ENCODE measurements at regions of chr3 and their contacts with region 1.

Region 1: DNA sequence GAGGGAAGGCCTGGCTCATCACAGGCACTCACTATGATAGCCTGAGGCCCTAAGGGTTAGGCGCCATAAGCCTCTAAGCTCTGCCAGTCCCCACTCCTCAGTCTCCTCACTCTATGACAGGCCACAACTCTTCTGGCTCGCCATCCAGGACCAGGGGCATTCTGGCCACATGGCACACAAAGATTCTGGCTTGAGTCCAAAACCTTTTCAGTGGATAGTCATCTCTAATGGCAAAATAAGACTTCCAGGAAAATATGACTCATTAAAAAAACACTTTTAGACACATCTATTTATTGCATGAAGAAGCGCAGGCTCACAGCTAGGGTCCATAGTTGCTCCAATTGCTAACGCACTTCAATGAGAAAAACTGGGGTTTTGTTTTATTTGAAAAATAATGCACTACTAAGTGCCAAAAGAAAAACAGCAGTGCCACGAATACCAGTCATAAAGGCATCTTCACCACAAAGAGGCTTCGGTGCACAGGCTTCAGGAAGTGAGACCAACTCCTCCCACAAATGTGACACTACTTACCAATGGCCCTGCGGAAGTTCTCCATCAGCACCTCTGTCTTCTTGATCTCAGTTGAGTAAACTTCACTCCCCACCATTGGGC is 11.1 kb downstream of the RUVBL1 start:
- DNase-seq: peak; percentile 85
- H3K4me3 ChIP-seq: no peak overlapping the region
- H3K27ac ChIP-seq: no peak overlapping the region
- H3K4me1 ChIP-seq: peaks cover 12% of the 10 kb centered on the region
- H3K27me3 ChIP-seq: no peaks in the 10 kb centered on the region
- CTCF ChIP-seq: peak in 1 of 2 donors; percentile 12

Region 2: DNA sequence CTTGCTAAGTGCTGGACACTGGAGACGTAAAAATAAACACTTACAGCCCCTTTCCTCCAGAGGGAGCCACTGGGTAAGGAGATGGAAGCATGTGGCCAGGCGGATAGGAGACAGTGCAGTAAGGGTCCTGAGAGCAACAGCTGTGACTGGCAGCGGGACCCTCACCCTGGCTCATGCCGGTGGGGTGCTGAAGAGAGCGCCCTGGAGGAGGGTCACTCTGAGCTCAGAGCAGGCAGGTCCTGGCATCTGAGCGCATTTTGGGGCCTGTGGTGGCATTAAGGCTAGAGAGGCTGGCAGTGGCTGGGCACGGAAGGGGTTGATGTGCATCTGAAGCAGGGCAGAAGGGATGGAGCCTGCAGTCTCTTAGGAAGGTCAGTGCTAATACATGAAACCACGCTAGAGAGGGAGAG is 44.2 kb before region 1 on chr3:
- CTCF ChIA-PET with region 1: no interaction called
- dilution Hi-C with region 1: loop called (anchors 5 kb)
- in situ Hi-C with region 1: no loop called
- intact Hi-C with region 1: no loop called
- DNase-seq: no peak
- H3K4me3 ChIP-seq: no peak overlapping the region
- H3K27ac ChIP-seq: no peak overlapping the region
- H3K4me1 ChIP-seq: peaks cover 20% of the 10 kb centered on the region
- H3K27me3 ChIP-seq: no peaks in the 10 kb centered on the region
- CTCF ChIP-seq: peak; percentile 57 to 63

Region 3: GRCh38 chr3:128080320-128081080 is 32.0 kb before region 1 on chr3:
- CTCF ChIA-PET with region 1: no interaction called
- dilution Hi-C with region 1: no loop called
- in situ Hi-C with region 1: no loop called
- intact Hi-C with region 1: no loop called
- DNase-seq: peak; percentile 79
- H3K4me3 ChIP-seq: no peak overlapping the region
- H3K27ac ChIP-seq: no peak overlapping the region
- H3K4me1 ChIP-seq: peaks cover 31% of the 10 kb centered on the region
- H3K27me3 ChIP-seq: no peaks in the 10 kb centered on the region
- CTCF ChIP-seq: no peak

Region 4: DNA sequence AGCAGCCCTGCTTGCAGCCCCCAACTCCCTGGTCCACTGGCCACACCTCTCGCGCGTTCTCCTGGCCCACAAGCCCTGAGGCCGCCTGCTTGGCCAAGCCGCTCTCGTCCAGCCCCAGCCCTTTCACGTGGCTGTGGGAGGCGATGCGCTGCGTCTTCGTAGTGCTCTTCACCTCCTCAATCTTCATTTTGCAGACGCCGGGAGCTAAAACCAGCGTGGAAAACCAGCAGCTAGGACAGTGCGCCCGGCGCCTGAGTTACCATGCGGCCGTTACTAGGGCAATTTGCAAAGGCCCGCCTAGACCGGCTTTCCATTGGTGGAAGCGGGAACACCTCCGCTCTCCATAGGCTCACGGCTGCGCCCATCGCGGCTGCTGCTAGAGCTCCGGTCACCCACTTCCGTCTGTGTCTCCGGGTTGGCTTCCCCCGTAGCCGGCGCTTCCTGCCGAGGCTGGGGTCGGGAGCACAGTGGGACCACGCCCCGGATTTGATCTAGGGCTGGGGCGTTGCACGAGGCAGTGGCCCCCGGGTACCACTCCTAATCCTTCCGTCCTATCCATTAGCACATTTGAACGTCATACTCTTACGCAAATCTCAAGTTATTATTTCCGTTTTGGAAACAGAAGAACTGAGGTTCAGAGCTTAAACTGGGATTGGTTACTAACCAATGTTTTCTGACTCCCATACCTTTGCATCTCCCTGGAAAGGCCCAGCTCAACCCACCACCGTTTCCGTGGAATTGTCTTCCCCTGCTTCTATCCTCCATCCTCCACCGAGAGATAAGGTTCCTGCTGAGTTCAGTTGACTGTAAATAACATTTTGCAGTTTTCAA is 11.3 kb after region 1 on chr3 and contains the start of gene RUVBL1:
- CTCF ChIA-PET with region 1: interaction called, 4 read pairs
- dilution Hi-C with region 1: no loop called
- in situ Hi-C with region 1: no loop called
- intact Hi-C with region 1: loop called (anchors 1 kb)
- DNase-seq: peak; percentile 97
- H3K4me3 ChIP-seq: peak within 1 kb of the TSS; percentile 98 to 100 (median 98)
- H3K27ac ChIP-seq: peak within 1 kb of the TSS; percentile 88
- H3K4me1 ChIP-seq: peaks cover 11% of the 10 kb centered on the region
- H3K27me3 ChIP-seq: no peaks in the 10 kb centered on the region
- CTCF ChIP-seq: no peak
- total RNA-seq, gene RUVBL1: 53.7 to 78.8 TPM

Region 5: DNA sequence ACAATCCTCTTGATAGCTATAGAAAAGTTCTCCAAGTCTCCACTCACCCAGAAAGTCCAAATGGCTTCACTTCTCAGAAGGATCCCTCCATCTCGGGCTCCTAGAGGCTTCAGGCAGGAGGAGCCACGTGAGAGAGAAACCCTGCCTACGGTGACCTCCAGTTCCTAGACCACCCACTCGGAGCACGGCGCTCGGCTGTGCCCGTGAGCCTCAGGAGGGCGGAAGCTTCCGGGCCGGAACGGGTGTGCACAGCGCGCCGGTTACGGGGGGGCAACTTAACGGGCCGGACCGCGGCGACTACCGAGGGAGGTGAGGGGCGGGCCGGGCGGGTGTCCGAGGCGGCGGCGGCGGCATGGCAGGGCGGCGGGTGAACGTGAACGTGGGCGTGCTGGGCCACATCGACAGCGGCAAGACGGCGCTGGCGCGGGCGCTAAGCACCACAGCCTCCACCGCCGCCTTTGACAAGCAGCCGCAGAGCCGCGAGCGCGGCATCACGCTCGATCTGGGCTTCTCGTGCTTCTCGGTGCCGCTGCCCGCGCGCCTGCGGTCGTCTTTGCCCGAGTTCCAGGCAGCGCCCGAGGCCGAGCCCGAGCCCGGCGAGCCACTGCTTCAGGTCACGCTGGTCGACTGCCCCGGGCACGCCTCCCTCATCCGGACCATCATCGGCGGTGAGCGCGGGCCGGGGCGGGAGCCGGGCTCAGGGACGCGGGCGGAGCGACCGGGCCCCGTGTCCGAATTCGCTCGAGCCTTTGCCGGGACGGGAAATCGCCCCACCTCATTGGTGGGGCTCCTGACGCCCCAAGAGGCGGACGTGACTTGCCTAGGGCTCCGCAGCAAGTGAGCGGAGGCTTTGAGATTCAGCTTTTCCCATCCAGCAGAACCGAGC is 40.9 kb after region 1 on chr3 and contains the start of gene EEFSEC:
- CTCF ChIA-PET with region 1: no interaction called
- dilution Hi-C with region 1: no loop called
- in situ Hi-C with region 1: no loop called
- intact Hi-C with region 1: loop called (anchors 5 kb)
- DNase-seq: peak; percentile 83
- H3K4me3 ChIP-seq: peak within 1 kb of the TSS; percentile 89 to 97 (median 90)
- H3K27ac ChIP-seq: peak within 1 kb of the TSS; percentile 78
- H3K4me1 ChIP-seq: peaks cover 5% of the 10 kb centered on the region
- H3K27me3 ChIP-seq: no peaks in the 10 kb centered on the region
- CTCF ChIP-seq: no peak
- total RNA-seq, gene EEFSEC: 7.0 to 15.9 TPM

Region 6: DNA sequence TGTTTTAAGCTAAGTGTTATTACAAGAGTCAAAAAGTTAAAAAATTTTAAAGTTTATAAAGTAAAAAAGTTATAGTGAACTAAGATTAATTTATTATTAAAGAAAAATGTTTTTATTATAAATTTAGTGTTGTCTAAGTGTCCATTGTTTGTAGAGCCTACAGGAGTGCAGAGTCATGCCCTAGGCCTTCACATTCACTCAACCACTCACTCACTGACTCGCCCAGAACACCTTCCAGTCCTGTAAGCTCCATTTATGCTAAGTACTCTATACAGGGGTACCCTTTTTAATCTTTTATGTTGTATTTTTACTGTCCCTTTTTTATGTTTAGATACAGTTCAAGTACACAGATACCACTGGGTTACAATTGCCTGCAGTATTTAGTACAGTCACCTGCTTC is 78.0 kb after region 1 on chr3:
- CTCF ChIA-PET with region 1: no interaction called
- dilution Hi-C with region 1: no loop called
- in situ Hi-C with region 1: no loop called
- intact Hi-C with region 1: no loop called
- DNase-seq: peak; percentile 32
- H3K4me3 ChIP-seq: no peak overlapping the region
- H3K27ac ChIP-seq: no peak overlapping the region
- H3K4me1 ChIP-seq: peaks cover 8% of the 10 kb centered on the region
- H3K27me3 ChIP-seq: no peaks in the 10 kb centered on the region
- CTCF ChIP-seq: no peak

Region 7: GRCh38 chr3:128278761-128279600 is 166.5 kb after region 1 on chr3:
- CTCF ChIA-PET with region 1: no interaction called
- dilution Hi-C with region 1: no loop called
- in situ Hi-C with region 1: no loop called
- intact Hi-C with region 1: no loop called
- DNase-seq: no peak
- H3K4me3 ChIP-seq: no peak overlapping the region
- H3K27ac ChIP-seq: no peak overlapping the region
- H3K4me1 ChIP-seq: peaks cover 18% of the 10 kb centered on the region
- H3K27me3 ChIP-seq: no peaks in the 10 kb centered on the region
- CTCF ChIP-seq: no peak

Measured in mammary epithelial cell (primary cell).